ENCODE measurements at regions of chr2 and their contacts with region 1.

Region 1: GRCh38 chr2:190408538-190409271 is 550 bp downstream of the MFSD6 start:
- DNase-seq: peak; percentile 91
- H3K4me3 Mint-ChIP-seq: peak overlapping the region; percentile 87
- H3K27ac Mint-ChIP-seq: peak overlapping the region; percentile 94
- H3K4me1 Mint-ChIP-seq: peaks cover 41% of the 10 kb centered on the region
- H3K27me3 Mint-ChIP-seq: no peaks in the 10 kb centered on the region

Region 2: GRCh38 chr2:190382851-190383250 is 25.9 kb before region 1 on chr2:
- intact Hi-C with region 1: loop called (anchors 2 kb)
- DNase-seq: peak; percentile 83
- H3K4me3 Mint-ChIP-seq: no peak overlapping the region
- H3K27ac Mint-ChIP-seq: no peak overlapping the region
- H3K4me1 Mint-ChIP-seq: peaks cover 5% of the 10 kb centered on the region
- H3K27me3 Mint-ChIP-seq: peaks cover 6% of the 10 kb centered on the region

Region 3: DNA sequence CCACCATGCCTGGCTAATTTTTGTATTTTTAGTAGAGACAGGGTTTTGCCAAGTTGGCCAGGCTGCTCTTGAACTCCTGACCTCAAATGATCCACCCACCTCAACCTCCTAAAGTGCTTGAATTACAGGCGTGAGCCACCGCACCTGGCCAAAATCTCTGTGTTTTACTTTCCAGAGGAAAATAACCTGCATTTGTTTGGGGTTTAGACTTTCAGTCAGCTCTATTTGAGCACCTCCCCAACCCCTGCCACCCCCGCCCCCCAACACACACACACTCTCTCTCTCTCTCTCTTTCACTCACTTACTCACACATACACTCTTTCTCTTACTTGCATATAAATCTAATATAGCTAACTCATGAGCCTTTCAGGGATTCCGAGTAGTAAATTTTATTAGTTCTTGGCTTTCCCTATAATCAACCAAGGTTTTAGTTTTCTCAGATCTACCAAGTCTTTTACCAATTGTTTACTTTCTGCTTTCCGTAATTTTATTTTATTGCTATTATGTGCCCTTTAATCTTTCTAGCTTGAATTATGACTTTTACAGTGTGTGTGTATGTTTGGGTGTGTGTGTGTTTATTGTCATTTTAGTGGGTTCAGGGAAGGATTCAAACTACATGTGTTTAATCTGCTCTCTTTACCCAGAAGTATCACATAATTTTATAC is 24.0 kb after region 1 on chr2:
- intact Hi-C with region 1: loop called (anchors 1 kb)
- DNase-seq: no peak
- H3K4me3 Mint-ChIP-seq: peak overlapping the region; percentile 0
- H3K27ac Mint-ChIP-seq: no peak overlapping the region
- H3K4me1 Mint-ChIP-seq: peaks cover 43% of the 10 kb centered on the region
- H3K27me3 Mint-ChIP-seq: no peaks in the 10 kb centered on the region

Region 4: DNA sequence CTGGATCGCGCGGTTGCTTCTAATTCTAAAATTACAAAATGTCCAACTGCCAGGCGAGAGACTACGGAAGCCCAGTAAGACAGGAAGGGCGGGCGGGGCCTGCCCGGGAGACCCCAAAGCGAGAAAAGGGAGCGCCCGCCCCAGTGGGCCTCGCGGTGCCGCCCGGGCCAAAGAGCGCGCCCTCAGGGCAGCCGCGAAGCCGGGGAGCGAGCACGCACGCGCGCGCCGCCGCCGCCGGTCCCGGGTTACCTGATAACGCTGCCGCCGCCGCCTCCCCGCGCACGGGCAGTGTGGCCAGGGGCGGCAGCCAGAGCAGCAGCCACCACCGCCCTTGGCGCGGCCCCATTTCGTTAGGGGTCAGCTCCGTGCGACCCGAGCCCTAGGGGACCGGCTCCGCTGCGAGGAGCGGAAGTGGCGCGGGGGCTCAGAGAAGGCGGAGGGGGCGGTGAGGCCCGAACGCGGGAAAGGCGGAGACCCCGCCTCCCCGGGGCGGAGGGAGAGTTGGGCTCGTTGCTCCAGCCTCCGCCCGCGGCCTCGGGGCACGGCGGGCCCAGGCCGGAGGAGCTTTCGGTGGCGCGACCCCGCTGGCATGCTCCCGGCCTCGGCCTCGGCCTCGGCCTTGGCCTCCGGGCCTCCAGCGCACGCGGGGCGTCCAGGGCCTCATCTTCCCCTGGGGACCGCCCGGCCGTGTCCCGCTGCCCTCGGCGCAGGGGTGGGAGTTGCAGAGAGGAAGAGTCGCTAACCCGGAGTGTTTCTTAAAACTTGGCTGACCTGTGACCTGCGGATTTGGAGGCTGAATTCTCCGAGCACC is 125.8 kb after region 1 on chr2 and contains the start of gene NEMP2:
- intact Hi-C with region 1: loop called (anchors 1 kb)
- DNase-seq: peak; percentile 95
- H3K4me3 Mint-ChIP-seq: peak within 1 kb of the TSS; percentile 93
- H3K27ac Mint-ChIP-seq: peak within 1 kb of the TSS; percentile 99
- H3K4me1 Mint-ChIP-seq: peaks cover 41% of the 10 kb centered on the region
- H3K27me3 Mint-ChIP-seq: no peaks in the 10 kb centered on the region
- total RNA-seq, gene NEMP2: 16.4 and 19.0 TPM in 2 replicates

Measured in activated CD4-positive, alpha-beta T cell treated with anti-CD3 and anti-CD28 coated beads, Interleukin-2, amount 10 ng/mL, durations not matched to agents 24 days and 14 days (primary cell).